Activated T-helper 1 cell treated with anti-CD3 and anti-CD28 coated beads, Interleukin-12 subunit alpha, Interleukin-12 subunit beta, Interleukin-2, Interleukin-4 antibody, amounts not matched to agents 30 ng/mL and 10 ng/mL and 1 ng/mL, durations not matched to agents 14 hours and 24 hours and 36 hours (primary cell): ENCODE measurements at regions of chr10 and their contacts with region 1.

Region 1: DNA sequence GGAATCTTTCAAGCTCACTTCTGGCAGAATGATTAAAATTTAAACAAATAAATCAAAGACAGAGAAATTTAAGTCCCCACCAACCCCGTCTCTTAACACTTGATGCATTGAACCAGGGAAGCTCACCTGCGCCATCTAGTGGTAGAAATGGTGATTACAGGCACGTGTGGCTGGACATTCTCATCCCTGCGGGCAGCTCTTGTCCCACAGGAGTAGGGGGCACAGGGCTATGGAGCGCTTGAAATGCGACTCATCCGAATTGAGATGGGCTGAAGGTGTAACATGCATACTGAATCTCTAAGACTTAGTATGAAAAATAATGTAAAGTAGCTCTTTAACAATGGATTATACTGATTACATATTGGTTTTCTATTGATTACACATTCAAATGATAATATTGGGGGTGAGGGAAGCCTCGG is 24.8 kb upstream of the SLIT1 start:
- DNase-seq: peak; percentile 41
- H3K4me3 Mint-ChIP-seq: no peak overlapping the region
- H3K27ac Mint-ChIP-seq: no peak overlapping the region
- H3K4me1 Mint-ChIP-seq: no peaks in the 10 kb centered on the region
- H3K27me3 Mint-ChIP-seq: peaks cover 2% of the 10 kb centered on the region

Region 2: DNA sequence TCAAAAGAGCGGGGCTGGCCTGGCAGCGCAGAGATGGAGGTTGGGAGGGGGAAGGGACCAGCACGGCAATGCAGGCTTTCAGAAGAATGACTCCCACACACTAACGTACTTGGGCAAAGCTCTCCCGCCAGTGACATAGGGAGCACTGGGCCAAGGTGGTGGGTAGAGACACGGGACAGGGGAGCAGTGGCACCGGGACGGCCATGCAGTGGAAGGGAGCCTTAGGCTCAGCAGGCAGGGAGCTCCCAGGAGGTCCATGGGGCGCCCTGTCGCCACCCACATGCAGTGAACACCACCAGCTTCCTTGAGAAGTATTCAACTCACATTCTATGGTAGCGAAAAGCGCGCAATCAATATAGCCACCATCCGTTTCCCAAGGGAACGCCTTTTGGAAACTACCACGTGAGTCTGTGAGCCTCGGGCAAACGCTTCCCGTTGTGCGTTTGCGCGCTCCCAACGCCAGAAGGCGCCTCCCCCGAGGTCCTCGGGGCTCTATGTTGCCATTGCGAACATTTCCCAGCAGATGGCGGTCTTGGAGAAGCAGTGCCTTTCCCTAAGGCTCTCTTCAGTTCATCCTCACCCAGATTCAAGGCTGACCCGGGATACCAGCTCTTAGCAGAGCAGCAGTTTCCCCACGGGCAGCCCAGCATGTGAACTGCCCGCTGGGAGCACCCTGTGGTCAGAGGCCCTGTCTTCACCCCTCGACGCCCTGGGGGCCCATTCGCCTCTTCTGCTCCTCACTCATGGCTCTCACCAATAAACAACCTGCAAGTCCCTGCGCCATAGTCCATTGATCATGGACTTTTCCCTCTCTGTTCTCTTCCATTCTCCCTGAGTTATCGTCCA is 835.3 kb before region 1 on chr10:
- intact Hi-C with region 1: loop called (anchors 10 kb)
- DNase-seq: peak; percentile 60
- H3K4me3 Mint-ChIP-seq: peak overlapping the region; percentile 74
- H3K27ac Mint-ChIP-seq: no peak overlapping the region
- H3K4me1 Mint-ChIP-seq: peaks cover 18% of the 10 kb centered on the region
- H3K27me3 Mint-ChIP-seq: peaks cover 13% of the 10 kb centered on the region

Region 3: GRCh38 chr10:96513698-96514561 is 696.6 kb before region 1 on chr10 and contains the start of gene TLL2:
- intact Hi-C with region 1: loop called (anchors 10 kb)
- DNase-seq: peak; percentile 63
- H3K4me3 Mint-ChIP-seq: peak within 1 kb of the TSS; percentile 66
- H3K27ac Mint-ChIP-seq: no peak within 1 kb of the TSS
- H3K4me1 Mint-ChIP-seq: peaks cover 7% of the 10 kb centered on the region
- H3K27me3 Mint-ChIP-seq: peaks cover 33% of the 10 kb centered on the region
- total RNA-seq, gene TLL2: 0.07 TPM in 1 of 2 replicates, not detected in the other

Region 4: DNA sequence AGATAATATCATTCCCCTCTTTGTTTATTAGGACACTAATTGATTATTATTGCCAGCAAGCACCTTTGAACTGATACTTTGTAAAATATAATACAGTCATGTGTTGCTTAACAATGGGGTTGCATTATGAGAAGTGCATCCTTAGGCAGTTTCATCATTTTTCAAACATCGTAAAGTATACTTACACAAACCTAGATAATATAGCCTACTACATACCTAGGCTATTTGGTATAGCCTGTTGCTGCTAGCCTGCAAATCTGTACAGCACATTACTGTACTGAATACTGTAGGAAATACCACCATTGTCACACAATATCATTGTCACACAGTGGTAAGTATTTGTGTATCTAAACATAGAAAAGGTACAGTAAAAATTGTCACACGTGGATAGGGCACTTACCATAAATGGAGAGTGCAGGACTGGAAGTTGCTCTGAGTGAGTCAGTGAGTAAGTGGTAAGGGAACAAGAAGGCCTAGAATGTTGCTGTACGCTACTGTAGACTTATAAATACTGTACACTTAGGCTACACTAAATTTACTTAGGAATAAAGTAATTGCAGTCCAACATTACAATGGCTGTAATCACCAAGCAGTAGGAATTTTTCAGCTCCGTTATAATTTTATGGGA is 307.7 kb before region 1 on chr10:
- intact Hi-C with region 1: loop called (anchors 10 kb)
- DNase-seq: no peak
- H3K4me3 Mint-ChIP-seq: no peak overlapping the region
- H3K27ac Mint-ChIP-seq: no peak overlapping the region
- H3K4me1 Mint-ChIP-seq: peaks cover 26% of the 10 kb centered on the region
- H3K27me3 Mint-ChIP-seq: no peaks in the 10 kb centered on the region

Region 5: GRCh38 chr10:97072851-97073665 is 137.5 kb before region 1 on chr10:
- intact Hi-C with region 1: loop called (anchors 1 kb)
- DNase-seq: peak; percentile 61
- H3K4me3 Mint-ChIP-seq: no peak overlapping the region
- H3K27ac Mint-ChIP-seq: no peak overlapping the region
- H3K4me1 Mint-ChIP-seq: peaks cover 8% of the 10 kb centered on the region
- H3K27me3 Mint-ChIP-seq: peaks cover 10% of the 10 kb centered on the region